Left cardiac atrium (tissue), 4 donors: ENCODE measurements at regions of chr7 and their contacts with region 1.

Region 1: GRCh38 chr7:85023045-85023712 is 163.7 kb downstream of the SEMA3D start:
- DNase-seq: no peak
- ATAC-seq: no peak

Region 2: DNA sequence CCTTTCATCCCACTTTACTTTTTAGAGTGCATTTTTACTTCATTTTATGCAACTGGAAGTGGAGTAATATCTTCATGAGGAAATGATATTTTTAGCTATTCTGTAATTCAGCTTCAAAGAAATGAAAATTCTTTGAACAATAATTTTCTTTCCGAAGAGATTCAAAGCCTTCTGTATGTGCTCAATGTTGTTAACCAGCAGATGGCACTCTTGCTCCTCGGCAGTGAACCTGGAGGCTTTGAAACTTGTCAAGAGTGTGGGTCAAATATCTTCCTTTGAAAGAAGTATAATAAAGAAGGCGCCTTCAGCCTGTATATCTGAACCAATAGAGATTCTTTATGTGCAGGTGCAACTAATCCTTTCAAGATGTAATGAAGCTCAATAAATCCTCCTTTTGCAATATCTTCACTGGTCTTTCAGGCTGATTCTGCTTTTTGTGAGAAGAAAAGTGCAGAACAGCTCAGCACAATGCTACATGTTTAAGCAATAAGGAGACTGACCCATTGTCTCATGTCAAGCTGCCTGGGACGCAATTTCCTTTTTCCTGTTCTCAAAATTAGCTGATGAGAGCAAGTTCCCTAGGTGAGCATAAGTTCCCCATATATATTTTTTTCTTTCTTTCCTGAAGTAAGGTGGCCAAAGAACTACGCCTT is 1087.0 kb before region 1 on chr7:
- intact Hi-C with region 1: loop called (anchors 2 to 10 kb)
- DNase-seq: peak; percentile 47
- ATAC-seq: peak; percentile 71 to 81

Region 3: DNA sequence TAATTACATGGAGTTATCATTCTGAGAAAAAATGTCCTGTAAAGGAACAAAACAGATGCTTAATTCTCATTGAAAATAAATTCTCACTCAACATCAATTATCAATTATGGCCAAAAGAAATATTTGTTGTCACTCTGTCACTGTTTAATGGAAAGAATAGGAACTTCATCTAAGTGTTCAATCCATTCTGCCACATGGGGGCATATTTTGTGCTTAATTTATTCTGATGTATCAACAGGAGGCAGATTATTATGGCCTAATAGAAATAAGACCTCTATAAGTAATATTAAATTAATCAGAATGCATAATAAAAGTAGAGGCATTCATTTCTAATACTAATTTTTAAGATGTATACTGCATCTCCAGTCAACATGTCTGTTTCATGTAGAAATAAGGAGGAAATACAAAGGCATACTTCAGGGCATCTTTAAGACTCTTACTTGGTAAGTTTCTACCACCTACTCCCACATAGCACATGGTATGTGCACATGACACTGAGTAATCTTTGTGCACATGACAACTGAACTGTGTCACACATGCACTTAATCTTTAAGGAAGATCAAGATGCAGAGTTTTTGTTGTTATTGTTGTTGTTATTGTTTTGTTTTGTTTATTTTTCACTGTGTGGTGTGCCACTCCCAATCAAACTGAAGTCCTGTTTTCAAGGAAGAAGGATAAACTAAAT is 408.2 kb before region 1 on chr7:
- intact Hi-C with region 1: loop called in 1 of 2 experiments (anchors 5 kb)
- DNase-seq: no peak
- ATAC-seq: no peak